ENCODE measurements at regions of chr17 and their contacts with region 1.

Region 1: DNA sequence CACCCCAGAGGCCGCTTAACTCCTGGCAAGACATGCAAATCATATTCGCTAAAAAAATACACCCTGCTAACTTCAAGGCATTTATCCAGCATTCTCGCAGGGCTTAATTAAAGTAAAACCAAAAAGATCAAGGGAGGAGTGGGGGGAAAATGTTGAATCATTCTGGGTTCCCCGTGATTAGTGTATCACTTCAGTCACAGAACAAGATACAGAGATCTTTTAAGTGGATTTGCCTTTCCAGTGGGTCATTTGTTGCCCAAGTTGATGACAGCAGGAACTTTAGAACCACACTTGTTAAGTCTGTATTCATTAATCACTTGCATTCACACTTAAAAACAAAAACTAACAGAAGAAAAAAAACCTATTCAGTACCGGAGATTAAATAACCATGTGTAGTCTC is 17.3 kb downstream of the CRYBA1 start:
- DNase-seq: no peak
- ATAC-seq: no peak
- H3K4me3 ChIP-seq: no peak overlapping the region
- H3K27ac ChIP-seq: no peak overlapping the region
- H3K4me1 ChIP-seq: peaks cover 5% of the 10 kb centered on the region; the same call in 1 of the 2 replicates
- H3K27me3 ChIP-seq: no peaks in the 10 kb centered on the region
- CTCF ChIP-seq: no peak
- POLR2A ChIP-seq: no peak
- RAD21 ChIP-seq: no peak

Region 2: DNA sequence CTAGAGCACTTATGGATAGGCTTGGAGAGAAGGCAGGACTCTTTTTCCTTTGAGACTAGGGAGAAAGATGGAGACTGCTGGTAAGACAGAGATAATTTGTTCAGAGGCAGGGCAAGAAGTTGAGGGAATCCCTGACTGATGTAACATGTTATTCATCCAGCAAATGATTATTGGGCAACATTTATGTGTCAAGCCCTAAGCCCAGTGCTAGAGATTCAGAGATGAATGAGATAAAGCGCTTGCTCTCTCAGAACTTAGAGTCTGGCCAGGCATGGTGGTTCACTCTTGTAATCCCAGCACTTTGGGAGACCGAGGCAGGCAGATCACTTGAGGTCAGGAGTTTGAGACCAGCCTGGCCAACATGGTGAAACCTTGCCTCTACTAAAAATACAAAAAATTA is 77.8 kb after region 1 on chr17:
- CTCF ChIA-PET with region 1: no interaction called
- POLR2A ChIA-PET with region 1: interaction called, 11 read pairs
- dilution Hi-C with region 1: no loop called
- in situ Hi-C with region 1: no loop called
- intact Hi-C with region 1: no loop called
- DNase-seq: peak; percentile 16
- ATAC-seq: no peak
- H3K4me3 ChIP-seq: no peak overlapping the region
- H3K27ac ChIP-seq: no peak overlapping the region
- H3K4me1 ChIP-seq: no peaks in the 10 kb centered on the region
- H3K27me3 ChIP-seq: peaks cover 17% of the 10 kb centered on the region
- CTCF ChIP-seq: no peak
- POLR2A ChIP-seq: no peak
- RAD21 ChIP-seq: no peak

Region 3: GRCh38 chr17:29357821-29358232 is 93.9 kb after region 1 on chr17:
- CTCF ChIA-PET with region 1: no interaction called
- POLR2A ChIA-PET with region 1: no interaction called
- dilution Hi-C with region 1: no loop called
- in situ Hi-C with region 1: no loop called
- intact Hi-C with region 1: no loop called
- DNase-seq: peak; percentile 65
- ATAC-seq: peak; percentile 80
- H3K4me3 ChIP-seq: no peak overlapping the region
- H3K27ac ChIP-seq: no peak overlapping the region
- H3K4me1 ChIP-seq: no peaks in the 10 kb centered on the region; the same call in 1 of the 2 replicates
- H3K27me3 ChIP-seq: 0 out of 2 replicates have a peak, but pooled peaks cover 2% of the 10 kb centered on the region
- CTCF ChIP-seq: no peak
- POLR2A ChIP-seq: no peak
- RAD21 ChIP-seq: no peak